Activated CD8-positive, alpha-beta memory T cell treated with anti-CD3 and anti-CD28 coated beads, Interleukin-2, amount 10 ng/mL, durations not matched to agents 7 days and 5 days (primary cell): ENCODE measurements at regions of chr5 and their contacts with region 1.

Region 1: DNA sequence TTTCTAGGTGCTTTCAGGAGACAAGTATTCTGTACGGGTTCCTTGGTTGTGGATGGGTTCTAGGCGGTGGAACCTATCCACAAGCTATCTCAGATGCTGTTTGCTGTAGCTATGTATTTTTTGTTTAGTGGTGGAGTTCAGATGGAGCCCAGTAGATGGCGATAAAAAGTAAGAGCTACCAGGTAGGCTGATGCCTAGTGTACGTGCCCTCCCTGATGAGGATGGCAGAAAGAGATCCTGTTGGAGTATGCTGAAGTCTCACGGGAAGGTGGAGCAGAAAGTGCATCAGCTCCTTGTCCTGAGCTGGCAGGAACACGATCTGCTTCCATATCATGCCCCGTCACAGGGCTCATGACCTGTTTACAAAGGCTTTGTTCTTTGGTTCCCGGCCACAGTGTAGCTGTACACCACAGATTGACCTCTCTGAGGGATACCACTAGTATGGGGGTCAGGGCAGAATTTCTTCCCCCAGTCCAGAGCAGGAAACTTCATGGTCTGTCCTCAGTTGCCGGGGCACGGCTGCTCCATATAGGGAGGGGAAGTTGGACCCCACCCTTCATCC is 12.6 kb upstream of the UGT3A2 start:
- DNase-seq: no peak
- ATAC-seq: peak; percentile 86
- H3K4me3 Mint-ChIP-seq: no peak overlapping the region
- H3K27ac Mint-ChIP-seq: no peak overlapping the region
- H3K4me1 Mint-ChIP-seq: no peaks in the 10 kb centered on the region
- H3K27me3 Mint-ChIP-seq: peaks cover 54% of the 10 kb centered on the region

Region 2: GRCh38 chr5:36089989-36090564 is 10.8 kb after region 1 on chr5:
- CTCF ChIA-PET with region 1: interaction called, 30 read pairs
- DNase-seq: no peak
- ATAC-seq: peak; percentile 33
- H3K4me3 Mint-ChIP-seq: no peak overlapping the region
- H3K27ac Mint-ChIP-seq: no peak overlapping the region
- H3K4me1 Mint-ChIP-seq: no peaks in the 10 kb centered on the region
- H3K27me3 Mint-ChIP-seq: peaks cover 24% of the 10 kb centered on the region

Region 3: GRCh38 chr5:36241631-36242533 is 162.6 kb after region 1 on chr5 and contains the start of gene NADK2:
- CTCF ChIA-PET with region 1: interaction called, 14 read pairs
- DNase-seq: peak; percentile 96
- ATAC-seq: peak; percentile 93
- H3K4me3 Mint-ChIP-seq: peak within 1 kb of the TSS; percentile 82
- H3K27ac Mint-ChIP-seq: peak within 1 kb of the TSS; percentile 90
- H3K4me1 Mint-ChIP-seq: peaks cover 40% of the 10 kb centered on the region
- H3K27me3 Mint-ChIP-seq: peaks cover 7% of the 10 kb centered on the region
- total RNA-seq, gene NADK2: 12.5 to 14.9 TPM

Region 4: DNA sequence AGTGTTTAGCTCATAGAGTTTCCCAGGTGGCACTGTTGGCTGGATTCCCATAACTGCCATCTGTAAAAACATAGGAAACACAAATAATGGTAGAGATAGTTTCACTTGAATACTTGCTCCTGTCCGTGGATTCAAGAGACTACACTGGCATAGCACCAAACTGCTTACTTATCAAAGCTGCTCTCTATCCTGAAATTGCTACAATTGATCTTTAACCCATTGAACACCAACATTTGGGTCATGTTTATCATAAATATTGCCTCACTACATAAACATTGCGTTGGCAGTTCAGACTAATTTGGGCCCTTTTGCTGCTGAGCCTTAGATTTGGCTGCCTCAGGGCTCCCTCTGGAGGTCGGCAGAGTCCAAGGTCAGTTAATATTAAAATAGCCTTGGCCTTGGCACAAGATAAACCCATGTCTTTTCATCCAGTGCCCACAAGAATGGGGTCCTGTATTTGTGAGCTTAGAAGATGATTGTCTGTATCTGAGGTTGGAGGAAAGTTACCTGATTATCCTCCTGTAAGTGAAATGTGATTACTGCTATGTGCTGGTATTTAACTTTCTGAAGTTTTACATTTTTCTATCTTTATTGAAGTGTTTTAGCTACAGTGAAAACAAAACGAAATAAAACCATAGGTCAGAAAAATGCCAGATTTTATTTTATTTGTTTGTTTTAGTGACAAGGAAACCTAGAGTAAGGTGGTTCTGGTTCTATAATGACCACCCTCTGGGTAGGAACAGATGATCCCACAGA is 226.5 kb after region 1 on chr5:
- CTCF ChIA-PET with region 1: interaction called, 13 read pairs
- DNase-seq: no peak
- ATAC-seq: peak; percentile 51
- H3K4me3 Mint-ChIP-seq: no peak overlapping the region
- H3K27ac Mint-ChIP-seq: no peak overlapping the region
- H3K4me1 Mint-ChIP-seq: no peaks in the 10 kb centered on the region
- H3K27me3 Mint-ChIP-seq: peaks cover 26% of the 10 kb centered on the region